HepG2 (cell line): ENCODE measurements at regions of chr15 and their contacts with region 1.

Region 1: GRCh38 chr15:92797168-92797951 is 102.8 kb upstream of the CHD2 start:
- DNase-seq: peak; percentile 78
- ATAC-seq: peak; percentile 27
- H3K4me3 ChIP-seq: peak overlapping the region in 2 of 3 experiments; percentile 46 to 65; a peak in 1 of 6 replicates
- H3K27ac ChIP-seq: peak overlapping the region; percentile 15
- H3K4me1 ChIP-seq: peaks cover 46% of the 10 kb centered on the region
- H3K27me3 ChIP-seq: no peaks in the 10 kb centered on the region
- CTCF ChIP-seq: peak; percentile 74
- EP300 ChIP-seq: no peak
- POLR2A ChIP-seq: no peak
- RAD21 ChIP-seq: peak; percentile 27; the same call in 1 of the 2 replicates

Region 2: DNA sequence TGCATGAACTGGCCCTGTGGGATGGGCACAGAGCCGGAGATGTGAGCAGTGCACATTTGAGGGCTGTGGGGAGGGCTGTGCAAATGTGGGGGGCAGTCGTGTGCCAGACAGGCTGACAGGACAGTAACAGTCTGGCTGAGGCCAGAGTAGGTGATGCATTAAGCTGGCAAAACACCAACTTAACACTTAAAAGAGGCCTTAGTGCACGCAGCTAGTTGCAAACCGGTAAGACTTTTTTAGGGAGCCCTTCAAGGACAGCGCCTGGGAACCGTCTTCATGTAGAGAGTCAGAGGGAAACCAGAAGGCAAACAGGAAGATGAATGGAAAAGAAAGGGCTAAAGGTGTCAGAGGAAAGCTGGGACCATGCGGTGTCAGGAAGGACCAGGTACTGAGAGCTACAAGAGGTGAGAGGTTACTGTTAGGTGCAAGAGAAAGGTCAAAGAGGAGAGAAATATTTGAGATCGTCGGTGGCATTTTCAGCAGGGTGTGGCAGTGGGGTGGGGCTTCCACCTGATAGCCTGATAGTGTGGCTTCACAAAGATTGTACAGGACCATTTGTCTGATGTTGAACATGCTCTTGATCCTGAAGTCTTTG is 72.7 kb after region 1 on chr15:
- CTCF ChIA-PET with region 1: no interaction called
- POLR2A ChIA-PET with region 1: no interaction called
- in situ Hi-C with region 1: no loop called
- intact Hi-C with region 1: no loop called
- DNase-seq: no peak
- ATAC-seq: peak; percentile 69
- H3K4me3 ChIP-seq: peak overlapping the region; percentile 8 to 45 (median 22); a peak in 5 of 6 replicates
- H3K27ac ChIP-seq: no peak overlapping the region
- H3K4me1 ChIP-seq: peaks cover 40% of the 10 kb centered on the region
- H3K27me3 ChIP-seq: no peaks in the 10 kb centered on the region; a peak in 1 of 5 replicates
- CTCF ChIP-seq: no peak
- EP300 ChIP-seq: no peak
- POLR2A ChIP-seq: no peak
- RAD21 ChIP-seq: no peak

Region 3: DNA sequence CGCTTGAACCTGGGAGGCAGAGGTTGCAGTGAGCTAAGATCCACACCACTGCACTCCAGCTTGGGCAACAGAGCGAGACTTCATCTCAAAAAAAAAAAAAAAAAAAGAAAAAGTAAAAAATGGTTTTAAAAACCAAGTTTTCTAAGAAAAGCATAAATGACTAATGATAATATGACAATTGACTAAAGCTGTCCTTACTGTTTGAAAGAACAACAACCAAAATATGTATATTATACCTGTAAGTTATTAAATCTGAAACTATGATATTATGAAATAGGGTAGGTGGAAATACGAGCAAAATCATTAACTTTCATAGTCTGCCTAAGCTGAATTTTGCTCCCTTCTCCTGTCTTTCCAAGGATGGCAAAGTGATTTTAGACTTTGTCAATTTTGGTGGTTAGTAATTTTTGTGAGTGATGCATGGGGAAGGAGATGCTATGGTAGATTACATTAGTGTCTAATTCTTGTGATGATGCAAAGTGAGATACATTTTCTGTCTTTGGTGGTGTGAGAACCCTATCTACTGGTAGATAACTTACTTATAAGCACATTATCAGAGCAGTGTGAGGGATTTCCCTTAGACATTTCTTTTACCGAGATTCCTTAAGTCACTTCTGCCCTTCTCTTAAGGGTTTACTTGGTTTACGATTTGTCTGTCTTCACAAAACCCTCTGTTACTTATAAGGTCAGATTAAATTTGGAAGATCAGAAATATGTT is 92.2 kb after region 1 on chr15:
- CTCF ChIA-PET with region 1: no interaction called
- POLR2A ChIA-PET with region 1: no interaction called
- in situ Hi-C with region 1: no loop called
- intact Hi-C with region 1: no loop called
- DNase-seq: no peak
- ATAC-seq: no peak
- H3K4me3 ChIP-seq: no peak overlapping the region
- H3K27ac ChIP-seq: no peak overlapping the region
- H3K4me1 ChIP-seq: peaks cover 67% of the 10 kb centered on the region
- H3K27me3 ChIP-seq: no peaks in the 10 kb centered on the region
- CTCF ChIP-seq: no peak
- EP300 ChIP-seq: no peak
- POLR2A ChIP-seq: no peak
- RAD21 ChIP-seq: no peak

Region 4: GRCh38 chr15:92917606-92918407 is 120.4 kb after region 1 on chr15:
- CTCF ChIA-PET with region 1: interaction called, 22 read pairs
- POLR2A ChIA-PET with region 1: interaction called, 4 read pairs
- in situ Hi-C with region 1: no loop called
- intact Hi-C with region 1: loop called (anchors 1 kb)
- DNase-seq: peak; percentile 87
- ATAC-seq: peak; percentile 39
- H3K4me3 ChIP-seq: no peak overlapping the region
- H3K27ac ChIP-seq: peak overlapping the region; percentile 60
- H3K4me1 ChIP-seq: peaks cover 98% of the 10 kb centered on the region
- H3K27me3 ChIP-seq: no peaks in the 10 kb centered on the region
- CTCF ChIP-seq: peak; percentile 84
- EP300 ChIP-seq: no peak
- POLR2A ChIP-seq: no peak
- RAD21 ChIP-seq: peak; percentile 81

Region 5: GRCh38 chr15:93018580-93018979 is 221.2 kb after region 1 on chr15:
- CTCF ChIA-PET with region 1: no interaction called
- POLR2A ChIA-PET with region 1: no interaction called
- in situ Hi-C with region 1: loop called (anchors 25 kb)
- intact Hi-C with region 1: no loop called
- DNase-seq: no peak
- ATAC-seq: no peak
- H3K4me3 ChIP-seq: no peak overlapping the region
- H3K27ac ChIP-seq: no peak overlapping the region
- H3K4me1 ChIP-seq: no peaks in the 10 kb centered on the region
- H3K27me3 ChIP-seq: no peaks in the 10 kb centered on the region
- CTCF ChIP-seq: peak; percentile 12; the same call in 1 of the 2 replicates
- EP300 ChIP-seq: no peak
- POLR2A ChIP-seq: no peak
- RAD21 ChIP-seq: no peak